HepG2 (cell line): ENCODE measurements at regions of chr1 and their contacts with region 1.

Region 1: GRCh38 chr1:76294482-76295194 is 220.1 kb downstream of the ST6GALNAC3 start:
- DNase-seq: no peak
- ATAC-seq: no peak
- H3K4me3 ChIP-seq: no peak overlapping the region
- H3K27ac ChIP-seq: no peak overlapping the region
- H3K4me1 ChIP-seq: no peaks in the 10 kb centered on the region
- H3K27me3 ChIP-seq: no peaks in the 10 kb centered on the region
- CTCF ChIP-seq: no peak
- EP300 ChIP-seq: no peak
- POLR2A ChIP-seq: no peak
- RAD21 ChIP-seq: no peak

Region 2: GRCh38 chr1:75655931-75656330 is 638.7 kb before region 1 on chr1:
- CTCF ChIA-PET with region 1: no interaction called
- POLR2A ChIA-PET with region 1: no interaction called
- in situ Hi-C with region 1: no loop called
- intact Hi-C with region 1: loop called (anchors 5 kb)
- DNase-seq: no peak
- ATAC-seq: no peak
- H3K4me3 ChIP-seq: no peak overlapping the region
- H3K27ac ChIP-seq: no peak overlapping the region
- H3K4me1 ChIP-seq: no peaks in the 10 kb centered on the region
- H3K27me3 ChIP-seq: no peaks in the 10 kb centered on the region
- CTCF ChIP-seq: no peak
- EP300 ChIP-seq: no peak
- POLR2A ChIP-seq: no peak
- RAD21 ChIP-seq: no peak